AG04449 (cell line): ENCODE measurements at regions of chr15 and their contacts with region 1.

Region 1: GRCh38 chr15:74826364-74826819 is at the start of gene CPLX3:
- DNase-seq: no peak
- H3K4me3 ChIP-seq: no peak within 1 kb of the TSS
- CTCF ChIP-seq: no peak

Region 2: GRCh38 chr15:74573987-74574386 is 252.4 kb before region 1 on chr15:
- CTCF ChIA-PET with region 1: no interaction called
- POLR2A ChIA-PET with region 1: no interaction called
- DNase-seq: no peak
- H3K4me3 ChIP-seq: no peak overlapping the region
- CTCF ChIP-seq: no peak

Region 3: DNA sequence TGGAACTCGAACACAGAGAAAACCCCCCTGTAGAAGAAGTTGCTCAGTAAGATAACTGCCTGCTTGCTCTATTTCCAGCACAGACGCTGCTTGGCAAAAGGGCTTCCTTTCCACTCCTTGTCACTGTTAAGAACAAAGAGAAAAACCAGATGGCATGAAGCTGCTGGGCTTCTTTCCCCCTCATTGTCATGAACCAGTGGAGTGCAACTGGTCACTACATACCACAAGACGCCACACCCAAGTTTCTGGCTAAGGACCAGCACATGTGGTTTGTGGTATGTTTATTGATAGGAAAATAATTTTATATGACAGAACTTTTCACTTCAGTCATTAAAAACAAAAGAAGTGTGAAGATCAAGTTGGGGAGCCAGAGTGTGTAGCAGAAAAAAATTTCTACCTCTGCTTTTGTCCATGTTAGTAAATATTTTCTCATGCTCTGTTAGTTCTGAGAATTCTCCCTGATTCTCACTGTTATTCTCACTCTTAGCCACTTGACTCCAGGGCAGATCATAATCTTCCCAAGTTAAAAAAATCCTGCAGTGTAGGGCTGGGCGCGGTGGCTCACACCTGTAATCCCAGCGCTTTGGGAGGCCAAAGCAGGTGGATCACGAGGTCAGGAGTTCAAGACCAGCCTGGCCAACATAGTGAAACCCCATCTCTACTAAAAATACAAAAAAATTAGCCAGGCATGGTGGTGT is 172.8 kb before region 1 on chr15:
- CTCF ChIA-PET with region 1: no interaction called
- POLR2A ChIA-PET with region 1: no interaction called
- DNase-seq: no peak
- H3K4me3 ChIP-seq: no peak overlapping the region
- CTCF ChIP-seq: no peak

Region 4: DNA sequence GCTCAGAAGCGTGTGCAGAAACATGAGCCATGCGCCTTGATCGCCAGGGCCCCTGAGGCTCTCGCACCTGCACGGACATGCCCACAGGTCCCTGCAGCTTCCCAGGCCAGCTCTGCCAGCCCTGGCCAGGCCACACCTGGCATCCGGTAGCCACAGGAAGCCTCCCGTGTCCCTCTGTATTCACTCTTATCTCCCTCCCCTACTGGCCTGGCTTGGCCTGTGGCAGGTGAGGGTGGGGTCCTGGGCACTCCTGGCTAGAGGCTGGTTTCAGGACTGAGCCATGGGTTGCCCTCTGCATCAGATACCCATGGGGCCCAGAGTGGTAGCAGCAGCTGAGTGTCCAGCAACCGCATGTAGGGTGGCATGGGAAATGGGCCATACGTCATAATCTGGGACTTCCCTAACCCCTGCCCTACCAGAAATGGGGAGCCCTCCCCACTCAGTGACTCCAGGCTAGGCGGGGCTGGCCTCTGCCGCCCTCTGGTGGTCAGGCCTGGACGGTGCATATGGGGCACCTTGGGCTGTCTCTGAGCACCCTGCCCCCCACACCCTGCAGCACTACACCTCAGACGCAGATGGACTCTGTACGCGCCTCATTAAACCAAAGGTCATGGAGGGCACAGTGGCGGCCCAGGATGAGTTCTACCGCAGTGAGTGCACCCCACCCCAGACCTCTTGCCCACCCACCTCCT is 26.4 kb before region 1 on chr15:
- CTCF ChIA-PET with region 1: interaction called, 28 read pairs
- POLR2A ChIA-PET with region 1: no interaction called
- DNase-seq: no peak
- H3K4me3 ChIP-seq: no peak overlapping the region
- CTCF ChIP-seq: peak; percentile 97

Region 5: DNA sequence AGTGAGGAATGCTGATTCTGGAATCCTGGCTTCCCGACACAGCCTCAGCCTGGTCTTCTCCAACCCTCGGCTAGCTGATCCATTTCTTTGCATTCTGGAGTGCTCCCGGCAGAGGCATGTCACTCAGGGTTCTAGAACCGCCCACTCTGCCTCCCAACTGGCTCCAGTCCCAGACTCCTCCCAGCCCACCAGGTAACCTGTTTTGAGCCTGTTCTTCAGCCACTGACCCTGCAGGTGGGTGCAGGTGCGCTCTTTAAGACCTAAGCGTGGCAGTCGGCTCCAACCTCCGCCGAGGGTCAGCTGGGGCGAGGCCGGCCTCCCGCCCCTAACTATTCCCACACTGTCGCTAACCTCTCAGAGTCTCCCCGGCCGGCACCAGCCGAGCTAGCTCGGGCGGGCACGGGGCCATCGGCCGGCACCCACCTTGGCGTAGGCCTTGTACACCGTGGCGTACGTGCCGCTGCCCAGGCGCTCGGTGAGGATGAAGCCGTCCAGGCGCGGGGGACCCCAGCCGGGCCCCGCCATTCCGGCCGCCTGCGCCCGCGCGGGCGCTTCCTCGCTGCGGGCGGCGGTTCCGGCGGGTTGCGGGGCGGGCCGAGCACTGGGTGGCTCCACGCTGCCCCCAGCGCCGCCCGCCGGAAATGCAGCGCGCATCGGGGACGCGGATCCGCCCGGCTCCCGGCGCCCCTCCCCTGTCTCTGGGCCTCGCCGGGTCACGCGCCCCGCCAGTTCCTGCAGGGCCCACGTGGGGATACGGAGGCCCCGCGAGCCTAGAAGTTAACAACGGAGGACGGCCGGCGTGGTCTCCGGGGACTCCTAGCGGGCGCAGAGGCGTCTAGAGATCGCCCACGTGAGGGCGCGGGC is 16.4 kb after region 1 on chr15 and contains the start of gene ULK3:
- CTCF ChIA-PET with region 1: interaction called, 43 read pairs
- POLR2A ChIA-PET with region 1: no interaction called
- DNase-seq: no peak
- H3K4me3 ChIP-seq: peak within 1 kb of the TSS; percentile 87
- CTCF ChIP-seq: peak; percentile 71